Right lobe of liver (tissue), 6 donors: ENCODE measurements at regions of chr1 and their contacts with region 1.

Region 1: GRCh38 chr1:22416555-22417454 is 34.8 kb upstream of the ZBTB40 start:
- DNase-seq: peak; percentile 78 to 82 (median 81)
- ATAC-seq: peak; percentile 51 to 75 (median 66)
- H3K4me3 ChIP-seq: no peak overlapping the region
- H3K27ac ChIP-seq: no peak overlapping the region
- H3K4me1 ChIP-seq: peaks cover 0 to 19% (median 7%) of the 10 kb centered on the region in 4 donors
- H3K27me3 ChIP-seq: no peaks in the 10 kb centered on the region
- CTCF ChIP-seq: peak; percentile 90 to 98 (median 96)
- POLR2A ChIP-seq: no peak

Region 2: DNA sequence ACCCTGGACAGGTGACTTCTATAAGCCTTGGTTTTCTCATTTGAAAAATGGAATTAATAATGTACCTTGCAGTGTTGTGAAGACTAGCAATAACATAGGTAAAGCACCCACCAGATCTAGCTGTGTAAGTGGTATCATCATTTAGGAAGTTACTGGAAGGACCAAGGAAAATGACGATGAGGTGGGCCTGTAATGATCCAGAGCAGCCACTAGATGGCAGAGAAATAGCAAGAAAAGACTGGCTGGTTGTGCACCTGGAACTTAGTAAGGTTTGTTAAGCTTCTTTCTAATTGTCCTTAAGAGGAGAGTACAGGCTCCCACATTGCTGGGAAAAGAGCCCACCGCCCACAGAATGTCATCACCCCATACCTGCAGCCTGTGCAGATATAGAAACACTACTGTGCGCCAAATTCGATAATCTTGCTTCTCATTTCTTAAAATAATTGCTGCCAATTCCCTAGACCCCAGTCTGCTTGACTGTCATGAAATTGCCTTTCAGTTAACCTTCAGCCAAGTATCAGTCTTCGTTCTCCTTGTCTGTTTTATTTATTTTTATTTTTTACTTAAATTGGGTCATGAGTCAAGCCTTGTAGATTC is 311.1 kb before region 1 on chr1:
- intact Hi-C with region 1: loop called in 1 of 2 experiments (anchors 10 kb)
- DNase-seq: no peak
- ATAC-seq: peak; percentile 73 to 81 (median 75)
- H3K4me3 ChIP-seq: no peak overlapping the region
- H3K27ac ChIP-seq: no peak overlapping the region
- H3K4me1 ChIP-seq: no peaks in the 10 kb centered on the region
- H3K27me3 ChIP-seq: no peaks in the 10 kb centered on the region
- CTCF ChIP-seq: peak; percentile 77 to 84 (median 78)
- POLR2A ChIP-seq: no peak

Region 3: DNA sequence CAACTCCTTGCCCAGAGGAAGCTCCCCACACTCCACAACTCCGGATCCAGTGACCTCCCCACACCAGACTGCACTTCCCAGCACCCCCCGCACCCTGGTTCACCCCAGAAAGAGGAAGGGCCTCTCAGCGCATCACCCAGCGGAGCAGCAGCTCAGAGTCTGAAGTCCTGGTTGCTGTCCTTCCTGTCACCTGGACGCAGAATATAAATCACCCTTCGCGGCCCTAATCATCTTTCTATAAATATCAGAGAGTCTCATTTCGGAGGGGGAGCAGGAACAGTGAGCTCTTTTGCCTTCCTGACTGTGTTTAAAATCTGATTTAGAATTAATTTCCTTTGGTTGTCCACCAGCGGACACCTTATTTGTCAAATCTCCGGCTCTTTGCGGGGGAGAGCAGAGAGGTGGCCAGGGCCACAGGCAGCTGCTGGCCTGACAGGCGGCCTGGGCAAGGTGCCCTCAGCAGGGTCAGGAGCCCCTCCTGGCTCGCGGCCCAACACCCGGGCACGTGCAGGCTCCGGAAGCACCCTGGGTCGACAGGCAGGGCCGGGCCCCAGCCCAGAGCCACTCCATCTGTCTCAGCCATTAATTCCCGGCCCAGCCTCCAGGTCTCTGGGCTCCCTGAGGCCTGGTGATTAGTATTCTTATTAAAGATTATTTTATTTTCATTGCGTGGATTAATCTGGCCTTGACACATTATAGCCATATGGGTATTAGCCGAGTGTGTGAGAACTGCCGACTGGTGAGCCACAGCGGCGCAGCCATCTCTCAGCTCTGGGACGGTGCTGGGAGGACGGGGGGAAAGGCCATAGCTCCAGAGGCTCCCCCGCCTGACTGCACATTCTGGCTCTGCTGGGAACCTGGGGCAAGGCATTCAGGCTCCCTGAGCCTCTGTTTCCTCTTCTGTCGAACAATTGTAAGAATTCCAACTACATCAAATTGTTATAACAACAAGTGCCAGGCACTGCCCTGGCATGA is 166.1 kb after region 1 on chr1:
- intact Hi-C with region 1: no loop called
- DNase-seq: no peak
- ATAC-seq: no peak
- H3K4me3 ChIP-seq: no peak overlapping the region
- H3K27ac ChIP-seq: no peak overlapping the region
- H3K4me1 ChIP-seq: no peaks in the 10 kb centered on the region
- H3K27me3 ChIP-seq: no peaks in the 10 kb centered on the region
- CTCF ChIP-seq: no peak
- POLR2A ChIP-seq: no peak

Region 4: DNA sequence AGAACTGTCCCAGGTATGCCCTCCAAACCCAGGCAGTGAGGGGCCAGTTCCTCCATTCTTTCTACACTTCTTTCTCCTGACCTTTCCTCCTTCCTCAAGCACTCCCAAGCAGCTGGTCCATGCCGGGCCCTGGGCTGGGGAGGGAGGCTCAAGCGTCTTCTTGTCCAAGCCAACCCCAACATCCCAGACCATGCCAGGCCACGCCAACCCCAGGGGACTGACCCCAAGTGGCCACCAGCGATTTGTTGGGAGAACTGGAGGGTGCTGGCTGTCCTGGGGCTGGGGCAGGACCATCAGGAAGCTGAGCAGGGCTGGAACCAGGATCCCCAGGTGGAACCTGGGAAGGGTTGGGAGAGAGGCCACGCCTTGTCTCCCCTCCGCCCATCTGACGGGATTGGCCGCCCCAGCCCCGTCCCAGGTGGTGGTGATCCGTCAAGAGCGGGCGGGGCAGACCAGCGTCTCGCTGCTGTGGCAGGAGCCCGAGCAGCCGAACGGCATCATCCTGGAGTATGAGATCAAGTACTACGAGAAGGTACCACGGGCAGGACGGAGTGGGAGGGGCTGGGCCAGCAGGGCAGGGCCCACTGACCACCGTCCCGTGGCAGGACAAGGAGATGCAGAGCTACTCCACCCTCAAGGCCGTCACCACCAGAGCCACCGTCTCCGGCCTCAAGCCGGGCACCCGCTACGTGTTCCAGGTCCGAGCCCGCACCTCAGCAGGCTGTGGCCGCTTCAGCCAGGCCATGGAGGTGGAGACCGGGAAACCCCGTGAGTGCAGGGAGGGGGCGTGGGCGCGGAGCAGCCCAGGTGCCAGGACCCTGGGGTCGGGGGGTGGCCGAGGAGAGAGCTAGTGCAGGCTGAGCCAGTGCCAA is 176.3 kb after region 1 on chr1:
- intact Hi-C with region 1: no loop called
- DNase-seq: no peak
- ATAC-seq: peak in 1 of 4 donors; percentile 6
- H3K4me3 ChIP-seq: no peak overlapping the region
- H3K27ac ChIP-seq: no peak overlapping the region
- H3K4me1 ChIP-seq: no peaks in the 10 kb centered on the region
- H3K27me3 ChIP-seq: no peaks in the 10 kb centered on the region
- CTCF ChIP-seq: no peak
- POLR2A ChIP-seq: no peak

Region 5: GRCh38 chr1:22641906-22642636 is 225.3 kb after region 1 on chr1:
- intact Hi-C with region 1: loop called (anchors 5 kb)
- DNase-seq: peak; percentile 84 to 87 (median 85)
- ATAC-seq: peak; percentile 85 to 91 (median 86)
- H3K4me3 ChIP-seq: no peak overlapping the region
- H3K27ac ChIP-seq: no peak overlapping the region
- H3K4me1 ChIP-seq: no peaks in the 10 kb centered on the region
- H3K27me3 ChIP-seq: no peaks in the 10 kb centered on the region
- CTCF ChIP-seq: peak; percentile 87 to 97 (median 95)
- POLR2A ChIP-seq: no peak